Activated CD8-positive, alpha-beta T cell treated with anti-CD3 and anti-CD28 coated beads for 36 hours (primary cell): ENCODE measurements at regions of chr13 and their contacts with region 1.

Region 1: GRCh38 chr13:43804461-43805070 is 17.8 kb upstream of the ENOX1 start:
- DNase-seq: no peak
- ATAC-seq: peak; percentile 50
- H3K4me3 Mint-ChIP-seq: no peak overlapping the region
- H3K27ac Mint-ChIP-seq: no peak overlapping the region
- H3K4me1 Mint-ChIP-seq: peaks cover 5% of the 10 kb centered on the region
- H3K27me3 Mint-ChIP-seq: peaks cover 3% of the 10 kb centered on the region
- CTCF ChIP-seq: peak; percentile 83

Region 2: DNA sequence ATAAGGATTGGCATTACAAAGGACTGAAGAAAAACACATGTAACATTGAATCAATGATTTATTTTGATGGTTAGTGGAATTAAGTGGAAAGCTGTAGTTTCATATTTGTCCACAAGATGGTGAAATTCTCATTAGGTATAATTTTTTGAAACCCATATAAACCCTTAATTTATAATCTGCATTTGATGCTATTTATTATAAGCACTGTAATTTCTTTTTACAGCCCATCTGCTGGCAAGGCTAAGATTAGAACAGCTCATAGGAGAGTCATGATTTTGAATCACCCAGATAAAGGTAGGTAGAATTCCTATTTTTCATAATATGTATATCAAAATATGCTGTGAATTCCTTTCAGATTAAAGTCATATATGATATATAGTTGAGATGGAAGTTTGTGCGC is 719.0 kb before region 1 on chr13:
- CTCF ChIA-PET with region 1: interaction called, 3 read pairs
- POLR2A ChIA-PET with region 1: no interaction called
- intact Hi-C with region 1: loop called (anchors 10 kb)
- DNase-seq: no peak
- ATAC-seq: no peak
- H3K4me3 Mint-ChIP-seq: no peak overlapping the region
- H3K27ac Mint-ChIP-seq: no peak overlapping the region
- H3K4me1 Mint-ChIP-seq: peaks cover 14% of the 10 kb centered on the region
- H3K27me3 Mint-ChIP-seq: no peaks in the 10 kb centered on the region
- CTCF ChIP-seq: peak; percentile 76

Region 3: DNA sequence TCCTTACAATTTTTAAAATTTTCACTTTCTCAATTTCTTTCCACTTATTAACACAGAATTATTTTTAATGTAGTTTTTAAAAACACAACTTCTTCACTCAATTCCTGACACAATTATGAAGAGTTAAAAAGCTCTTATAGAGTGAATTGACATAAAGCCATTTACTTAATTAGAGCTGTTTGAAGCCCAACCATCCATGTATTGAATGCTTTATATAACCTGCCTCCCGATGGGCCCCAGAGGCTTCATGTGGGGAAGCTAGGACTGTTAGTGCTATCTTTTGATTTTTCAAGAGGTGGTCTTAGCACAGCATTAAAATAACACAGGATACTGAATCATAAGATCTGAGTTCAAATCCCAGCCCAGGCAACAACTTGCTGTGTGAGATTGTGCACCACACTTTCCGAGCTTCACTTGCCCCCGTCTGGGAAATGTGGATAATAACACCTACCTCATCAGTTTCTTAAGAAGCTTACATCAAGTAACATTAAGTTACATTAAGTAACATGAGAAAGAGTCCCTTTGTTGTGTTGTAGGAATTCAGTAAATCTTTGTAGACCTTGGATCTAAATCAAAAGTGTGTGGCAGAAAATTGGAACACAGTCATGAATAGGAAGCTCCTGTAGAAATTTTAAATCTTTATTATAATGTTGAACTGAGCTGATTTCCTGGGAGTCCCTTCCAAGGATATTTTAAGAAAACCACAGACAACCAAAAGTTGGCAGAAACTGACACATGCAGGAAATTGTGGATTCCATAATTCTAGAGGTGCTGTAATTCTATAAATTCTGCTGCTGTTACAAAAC is 12.3 kb before region 1 on chr13:
- CTCF ChIA-PET with region 1: interaction called, 23 read pairs
- POLR2A ChIA-PET with region 1: no interaction called
- intact Hi-C with region 1: no loop called
- DNase-seq: no peak
- ATAC-seq: no peak
- H3K4me3 Mint-ChIP-seq: no peak overlapping the region
- H3K27ac Mint-ChIP-seq: no peak overlapping the region
- H3K4me1 Mint-ChIP-seq: peaks cover 5% of the 10 kb centered on the region
- H3K27me3 Mint-ChIP-seq: peaks cover 41% of the 10 kb centered on the region
- CTCF ChIP-seq: no peak

Region 4: GRCh38 chr13:43838594-43839308 is 34.2 kb after region 1 on chr13:
- CTCF ChIA-PET with region 1: no interaction called
- POLR2A ChIA-PET with region 1: no interaction called
- intact Hi-C with region 1: no loop called
- DNase-seq: no peak
- ATAC-seq: no peak
- H3K4me3 Mint-ChIP-seq: no peak overlapping the region
- H3K27ac Mint-ChIP-seq: no peak overlapping the region
- H3K4me1 Mint-ChIP-seq: no peaks in the 10 kb centered on the region
- H3K27me3 Mint-ChIP-seq: peaks cover 2% of the 10 kb centered on the region
- CTCF ChIP-seq: no peak